CD4-positive, alpha-beta memory T cell (primary cell): ENCODE measurements at regions of chr1 and their contacts with region 1.

Region 1: GRCh38 chr1:199243423-199244061 is 604.7 kb downstream of the PTPRC start:
- DNase-seq: peak; percentile 53 to 64 (median 58)
- H3K4me3 ChIP-seq: no peak overlapping the region
- H3K4me3 Mint-ChIP-seq: peak overlapping the region in 1 of 8 donors; percentile 15
- H3K27ac ChIP-seq: no peak overlapping the region
- H3K27ac Mint-ChIP-seq: peak overlapping the region in 1 of 7 donors; percentile 57
- H3K4me1 ChIP-seq: peaks cover 5% of the 10 kb centered on the region
- H3K4me1 Mint-ChIP-seq: peaks cover 0 to 5% (median 2%) of the 10 kb centered on the region in 4 donors
- H3K27me3 ChIP-seq: no peaks in the 10 kb centered on the region
- H3K27me3 Mint-ChIP-seq: peaks cover 0 to 2% of the 10 kb centered on the region in 2 donors

Region 2: DNA sequence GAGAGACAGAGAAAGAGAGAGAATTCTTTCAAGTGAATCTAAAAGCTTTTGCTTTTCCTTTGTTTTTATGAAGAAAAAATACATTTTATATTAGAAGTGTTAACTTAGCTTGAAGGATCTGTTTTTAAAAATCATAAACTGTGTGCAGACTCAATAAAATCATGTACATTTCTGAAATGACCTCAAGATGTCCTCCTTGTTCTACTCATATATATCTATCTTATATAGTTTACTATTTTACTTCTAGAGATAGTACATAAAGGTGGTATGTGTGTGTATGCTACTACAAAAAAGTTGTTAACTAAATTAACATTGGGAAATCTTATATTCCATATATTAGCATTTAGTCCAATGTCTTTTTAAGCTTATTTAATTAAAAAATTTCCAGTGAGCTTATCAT is 487.1 kb before region 1 on chr1:
- CTCF ChIA-PET with region 1: no interaction called
- POLR2A ChIA-PET with region 1: no interaction called
- intact Hi-C with region 1: loop called (anchors 5 kb)
- DNase-seq: no peak
- H3K4me3 ChIP-seq: no peak overlapping the region
- H3K4me3 Mint-ChIP-seq: no peak overlapping the region
- H3K27ac ChIP-seq: no peak overlapping the region
- H3K27ac Mint-ChIP-seq: peak overlapping the region in 2 of 7 donors; percentile 59 to 70
- H3K4me1 ChIP-seq: peaks cover 11% of the 10 kb centered on the region
- H3K4me1 Mint-ChIP-seq: peaks cover 8 to 26% (median 20%) of the 10 kb centered on the region in 4 donors
- H3K27me3 ChIP-seq: no peaks in the 10 kb centered on the region
- H3K27me3 Mint-ChIP-seq: no peaks in the 10 kb centered on the region

Region 3: DNA sequence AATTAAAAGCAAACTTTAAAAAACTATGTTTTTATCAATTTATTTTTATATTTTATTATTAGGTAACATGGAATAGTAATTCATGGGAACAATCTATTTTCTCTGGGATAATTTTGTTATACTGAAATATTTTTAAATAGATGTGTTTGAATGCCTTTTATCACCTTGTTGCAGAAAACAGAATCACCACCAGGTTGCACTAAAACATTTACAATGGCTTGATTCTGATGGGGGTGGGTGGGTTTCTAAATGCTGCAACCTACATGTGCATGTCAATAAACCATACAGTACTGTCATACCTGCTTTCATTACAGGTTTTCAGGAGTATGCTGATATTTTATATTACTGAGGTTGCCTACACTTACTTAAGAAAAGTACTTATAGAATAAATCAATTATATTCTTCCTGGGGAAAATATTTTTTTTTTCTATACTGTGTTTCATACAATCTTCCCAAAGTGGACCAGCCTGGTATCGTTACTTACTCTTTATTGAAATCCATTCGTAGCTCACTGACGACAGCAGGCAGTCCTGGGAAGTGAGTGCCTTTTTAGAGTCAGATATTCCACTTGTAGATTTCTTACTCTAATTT is 471.9 kb before region 1 on chr1:
- CTCF ChIA-PET with region 1: interaction called, 3 read pairs
- POLR2A ChIA-PET with region 1: no interaction called
- intact Hi-C with region 1: loop called (anchors 5 kb)
- DNase-seq: no peak
- H3K4me3 ChIP-seq: no peak overlapping the region
- H3K4me3 Mint-ChIP-seq: no peak overlapping the region
- H3K27ac ChIP-seq: no peak overlapping the region
- H3K27ac Mint-ChIP-seq: no peak overlapping the region
- H3K4me1 ChIP-seq: no peaks in the 10 kb centered on the region
- H3K4me1 Mint-ChIP-seq: peaks cover 0 to 1% (median 0%) of the 10 kb centered on the region in 4 donors
- H3K27me3 ChIP-seq: no peaks in the 10 kb centered on the region
- H3K27me3 Mint-ChIP-seq: peaks cover 0 to 6% of the 10 kb centered on the region in 2 donors

Region 4: GRCh38 chr1:199313434-199313833 is 69.9 kb after region 1 on chr1:
- CTCF ChIA-PET with region 1: no interaction called
- POLR2A ChIA-PET with region 1: no interaction called
- intact Hi-C with region 1: no loop called
- DNase-seq: no peak
- H3K4me3 ChIP-seq: no peak overlapping the region
- H3K4me3 Mint-ChIP-seq: no peak overlapping the region
- H3K27ac ChIP-seq: no peak overlapping the region
- H3K27ac Mint-ChIP-seq: no peak overlapping the region
- H3K4me1 ChIP-seq: no peaks in the 10 kb centered on the region
- H3K4me1 Mint-ChIP-seq: no peaks in the 10 kb centered on the region
- H3K27me3 ChIP-seq: no peaks in the 10 kb centered on the region
- H3K27me3 Mint-ChIP-seq: peaks cover 11 to 14% of the 10 kb centered on the region in 2 donors